Prostate gland (tissue), 2 donors: ENCODE measurements at regions of chr4 and their contacts with region 1.

Region 1: DNA sequence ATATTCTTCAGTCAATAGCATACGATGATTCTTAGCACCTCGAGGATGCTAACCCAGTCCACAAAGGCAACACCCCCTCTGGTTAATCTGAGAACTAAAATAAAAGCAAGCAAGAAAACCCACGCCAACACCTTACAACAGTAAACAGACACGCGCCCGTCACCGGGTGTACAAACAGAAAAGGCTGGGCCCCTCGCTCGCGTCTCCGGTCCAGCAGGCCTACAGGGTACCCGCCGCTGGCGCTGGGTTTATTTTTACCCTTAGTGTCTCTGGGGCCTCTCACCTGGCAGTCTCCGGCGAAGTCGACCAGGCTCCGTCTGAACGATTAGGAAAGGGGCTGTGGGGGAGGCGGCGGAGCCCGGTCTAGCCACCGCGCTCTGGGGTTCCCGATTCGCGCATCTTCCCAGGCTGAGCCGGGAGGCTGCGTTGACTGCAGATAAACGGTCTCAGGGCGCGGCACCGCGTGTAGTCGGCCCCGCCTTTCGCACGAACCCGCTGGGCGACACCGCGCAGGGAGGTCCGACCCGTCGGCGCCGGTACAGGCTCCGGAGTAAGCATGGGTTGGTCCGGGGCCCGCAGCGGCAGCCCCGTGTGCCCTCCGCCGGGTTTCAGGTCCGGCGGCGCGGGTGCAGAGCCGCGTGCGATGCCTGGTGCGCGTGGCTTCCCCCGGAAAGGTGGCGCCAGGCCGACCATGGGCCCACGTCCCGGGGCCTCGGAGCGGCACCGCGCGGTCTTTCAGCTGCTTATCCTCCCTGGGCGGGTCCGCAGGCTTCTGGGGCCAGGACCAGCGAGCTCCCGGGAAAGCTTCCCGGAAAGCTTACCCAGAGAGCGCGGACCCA is 441 bp downstream of the SLC9B2 start:
- DNase-seq: peak; percentile 30
- H3K4me3 ChIP-seq: peak overlapping the region; percentile 52 to 54
- H3K27ac ChIP-seq: peak overlapping the region; percentile 71 to 78
- H3K4me1 ChIP-seq: no peaks in the 10 kb centered on the region
- H3K27me3 ChIP-seq: no peaks in the 10 kb centered on the region
- CTCF ChIP-seq: no peak
- POLR2A ChIP-seq: no peak

Region 2: DNA sequence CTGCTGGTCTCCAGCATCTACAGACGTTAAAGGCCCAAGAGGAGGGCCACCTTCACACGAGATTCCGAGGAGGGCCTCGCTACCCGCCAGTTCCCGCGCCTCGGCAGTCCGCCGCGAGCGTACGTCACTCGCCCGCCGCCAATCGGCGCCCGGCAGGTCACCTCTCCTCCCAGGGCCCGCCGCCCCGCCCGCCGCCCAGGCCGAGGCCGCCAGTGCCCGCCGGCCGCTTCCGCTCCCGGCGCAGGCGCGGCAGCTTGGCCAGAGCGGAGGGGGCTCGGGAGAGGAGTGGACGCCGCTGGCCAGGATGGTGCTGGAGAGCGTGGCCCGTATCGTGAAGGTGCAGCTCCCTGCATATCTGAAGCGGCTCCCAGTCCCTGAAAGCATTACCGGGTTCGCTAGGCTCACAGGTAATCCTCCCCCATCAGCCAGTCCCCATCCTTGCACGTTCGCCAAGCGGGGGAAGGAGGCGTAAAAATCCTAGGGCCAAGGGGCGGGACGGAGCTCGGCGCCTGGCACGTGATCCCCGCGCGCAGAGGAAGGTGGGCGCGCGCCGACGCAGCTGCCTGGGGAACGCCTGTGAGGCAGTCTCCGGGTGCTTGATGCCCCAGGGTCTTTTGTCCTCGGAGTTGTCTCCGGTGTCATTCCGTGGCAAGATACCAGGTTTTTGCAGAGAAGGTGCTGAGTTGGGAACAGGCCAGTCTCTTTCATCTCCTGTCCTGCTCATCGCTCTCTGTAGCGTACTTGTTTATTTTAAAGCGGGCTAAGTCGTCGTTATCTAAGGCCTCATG is 207.1 kb before region 1 on chr4 and contains the start of gene CISD2:
- intact Hi-C with region 1: loop called (anchors 10 kb)
- DNase-seq: peak; percentile 91
- H3K4me3 ChIP-seq: peak within 1 kb of the TSS; percentile 62 to 67
- H3K27ac ChIP-seq: peak within 1 kb of the TSS; percentile 89 to 99
- H3K4me1 ChIP-seq: no peaks in the 10 kb centered on the region
- H3K27me3 ChIP-seq: no peaks in the 10 kb centered on the region
- CTCF ChIP-seq: peak in 1 of 4 experiments; percentile 26
- POLR2A ChIP-seq: peak; percentile 72
- total RNA-seq, gene CISD2: 4.2 to 16.4 TPM